ENCODE measurements at regions of chr14 and their contacts with region 1.

Region 1: GRCh38 chr14:30375296-30375892 is 183.6 kb upstream of the G2E3 start:
- DNase-seq: peak; percentile 47
- CTCF ChIP-seq: peak; percentile 71

Region 2: DNA sequence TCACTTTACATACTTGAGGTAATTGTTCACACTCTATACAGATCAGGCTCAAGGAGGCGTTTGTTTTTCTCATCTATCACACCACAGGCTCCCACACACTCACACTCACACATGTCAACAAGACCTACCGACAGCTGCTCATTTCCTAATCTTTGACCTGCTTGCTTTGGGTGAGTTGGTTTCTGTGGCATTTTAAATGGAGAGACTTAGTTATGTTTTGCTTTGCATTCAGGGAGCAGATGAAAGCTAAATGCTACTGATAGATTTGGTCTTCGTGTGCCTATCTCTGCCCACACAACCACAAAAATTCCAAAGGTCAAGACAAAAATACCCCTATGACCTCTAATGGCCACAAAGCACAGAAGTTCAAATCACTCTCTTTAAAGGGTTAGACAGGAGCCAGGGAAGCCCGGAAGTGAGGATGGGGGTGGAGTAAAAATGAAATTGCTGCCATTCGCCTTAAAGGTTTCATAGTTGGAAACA is 19.9 kb before region 1 on chr14:
- CTCF ChIA-PET with region 1: interaction called, 25 read pairs
- POLR2A ChIA-PET with region 1: no interaction called
- DNase-seq: peak; percentile 20
- CTCF ChIP-seq: no peak

Region 3: GRCh38 chr14:30389134-30389876 is 13.9 kb after region 1 on chr14:
- CTCF ChIA-PET with region 1: interaction called, 10 read pairs
- POLR2A ChIA-PET with region 1: no interaction called
- DNase-seq: no peak
- CTCF ChIP-seq: no peak

Measured in GM10248 (cell line).